ENCODE measurements at regions of chr3 and their contacts with region 1.

Region 1: GRCh38 chr3:98039322-98040024 is 4.4 kb upstream of the GABRR3 start:
- DNase-seq: peak; percentile 86 to 93 (median 92)
- H3K4me3 ChIP-seq: peak overlapping the region in 6 of 7 experiments; percentile 28 to 77 (median 50)
- H3K27ac ChIP-seq: no peak overlapping the region
- H3K4me1 ChIP-seq: peaks cover 0 to 6% (median under 1%) of the 10 kb centered on the region in 4 experiments
- H3K27me3 ChIP-seq: peaks cover 0 to 7% (median 0%) of the 10 kb centered on the region in 5 experiments

Region 2: DNA sequence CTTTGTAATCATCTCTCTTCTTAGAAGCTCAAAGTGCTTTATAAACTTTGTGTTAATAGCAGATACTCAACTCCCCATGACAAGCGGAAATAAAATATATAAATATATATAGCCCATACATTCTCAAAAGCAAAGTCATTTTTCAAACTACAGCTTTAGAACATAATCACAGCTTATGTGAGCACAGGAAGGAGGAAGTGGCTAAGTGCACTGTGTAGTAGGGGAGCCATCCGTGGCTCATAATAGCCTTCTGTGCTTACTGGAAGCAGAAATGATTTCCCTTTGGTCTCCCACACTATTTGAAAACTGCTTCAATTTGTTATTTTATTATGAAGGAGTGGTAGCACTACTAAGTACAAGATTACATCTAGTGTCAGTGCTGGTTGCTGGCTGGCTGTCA is 426.3 kb before region 1 on chr3:
- CTCF ChIA-PET with region 1: no interaction called
- POLR2A ChIA-PET with region 1: no interaction called
- DNase-seq: no peak
- H3K4me3 ChIP-seq: no peak overlapping the region
- H3K27ac ChIP-seq: no peak overlapping the region
- H3K4me1 ChIP-seq: peaks cover 0 to 3% (median 0%) of the 10 kb centered on the region in 4 experiments
- H3K27me3 ChIP-seq: no peaks in the 10 kb centered on the region

Region 3: GRCh38 chr3:97952280-97952679 is 87.2 kb before region 1 on chr3:
- CTCF ChIA-PET with region 1: no interaction called
- POLR2A ChIA-PET with region 1: no interaction called
- DNase-seq: no peak
- H3K4me3 ChIP-seq: no peak overlapping the region
- H3K27ac ChIP-seq: no peak overlapping the region
- H3K4me1 ChIP-seq: no peaks in the 10 kb centered on the region
- H3K27me3 ChIP-seq: no peaks in the 10 kb centered on the region

Region 4: GRCh38 chr3:98329392-98330124 is 290.1 kb after region 1 on chr3:
- CTCF ChIA-PET with region 1: interaction called, 41 read pairs
- POLR2A ChIA-PET with region 1: no interaction called
- DNase-seq: peak; percentile 42 to 71 (median 63)
- H3K4me3 ChIP-seq: no peak overlapping the region
- H3K27ac ChIP-seq: no peak overlapping the region
- H3K4me1 ChIP-seq: no peaks in the 10 kb centered on the region
- H3K27me3 ChIP-seq: no peaks in the 10 kb centered on the region

Measured in common myeloid progenitor, CD34-positive (primary cell).